ENCODE measurements at regions of chr3 and their contacts with region 1.

Region 1: DNA sequence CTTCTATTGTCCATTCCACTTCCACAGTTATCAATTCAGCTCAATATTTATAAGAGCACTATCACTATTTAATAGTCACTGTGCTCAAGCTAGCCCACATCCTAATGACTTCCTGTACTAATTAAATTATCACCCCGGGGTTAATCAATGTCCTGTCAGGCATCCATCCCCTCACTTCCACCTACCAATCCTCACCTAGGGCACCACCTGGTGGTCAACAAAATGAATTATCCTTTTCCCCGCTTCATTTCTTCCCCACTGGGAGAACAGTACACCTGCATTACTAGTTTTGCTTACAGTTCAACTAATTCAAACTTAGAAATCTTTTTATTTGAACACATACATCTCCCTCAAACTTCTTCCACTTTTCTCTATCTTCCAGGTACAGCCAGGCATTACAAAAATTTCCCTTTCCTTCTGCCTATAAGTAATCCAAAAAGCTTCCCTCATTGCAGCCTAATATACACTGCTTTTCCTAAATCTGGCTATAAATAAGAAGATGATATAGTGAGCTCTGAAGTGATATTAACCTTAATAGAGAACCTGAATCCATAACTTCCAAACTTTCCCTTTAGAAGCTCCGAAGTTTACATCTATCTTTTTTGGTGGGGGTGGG is 68.5 kb downstream of the TMCC1 start:
- DNase-seq: peak; percentile 74
- ATAC-seq: peak; percentile 50
- H3K4me3 ChIP-seq: no peak overlapping the region
- H3K4me3 Mint-ChIP-seq: no peak overlapping the region
- H3K27ac ChIP-seq: no peak overlapping the region
- H3K27ac Mint-ChIP-seq: no peak overlapping the region
- H3K4me1 ChIP-seq: peaks cover 11 to 12% of the 10 kb centered on the region in 2 donors
- H3K4me1 Mint-ChIP-seq: peaks cover 41% of the 10 kb centered on the region
- H3K27me3 ChIP-seq: no peaks in the 10 kb centered on the region
- H3K27me3 Mint-ChIP-seq: no peaks in the 10 kb centered on the region
- CTCF ChIP-seq: peak; percentile 80

Region 2: GRCh38 chr3:129173206-129173605 is 651.8 kb before region 1 on chr3:
- CTCF ChIA-PET with region 1: no interaction called
- POLR2A ChIA-PET with region 1: no interaction called
- intact Hi-C with region 1: no loop called
- DNase-seq: no peak
- ATAC-seq: no peak
- H3K4me3 ChIP-seq: no peak overlapping the region
- H3K4me3 Mint-ChIP-seq: no peak overlapping the region
- H3K27ac ChIP-seq: peak overlapping the region in 1 of 2 donors; percentile 33
- H3K27ac Mint-ChIP-seq: no peak overlapping the region
- H3K4me1 ChIP-seq: peaks cover 23 to 43% of the 10 kb centered on the region in 2 donors
- H3K4me1 Mint-ChIP-seq: peaks cover 49% of the 10 kb centered on the region
- H3K27me3 ChIP-seq: no peaks in the 10 kb centered on the region
- H3K27me3 Mint-ChIP-seq: no peaks in the 10 kb centered on the region
- CTCF ChIP-seq: no peak

Region 3: GRCh38 chr3:129323651-129324294 is 501.3 kb before region 1 on chr3:
- CTCF ChIA-PET with region 1: no interaction called
- POLR2A ChIA-PET with region 1: no interaction called
- intact Hi-C with region 1: loop called (anchors 5 kb)
- DNase-seq: peak; percentile 69
- ATAC-seq: peak; percentile 82
- H3K4me3 ChIP-seq: no peak overlapping the region
- H3K4me3 Mint-ChIP-seq: no peak overlapping the region
- H3K27ac ChIP-seq: no peak overlapping the region
- H3K27ac Mint-ChIP-seq: no peak overlapping the region
- H3K4me1 ChIP-seq: peaks cover 2 to 5% of the 10 kb centered on the region in 2 donors
- H3K4me1 Mint-ChIP-seq: peaks cover 3% of the 10 kb centered on the region
- H3K27me3 ChIP-seq: peaks cover 0 to 12% (median 6%) of the 10 kb centered on the region in 4 experiments
- H3K27me3 Mint-ChIP-seq: peaks cover 5% of the 10 kb centered on the region
- CTCF ChIP-seq: peak; percentile 50

Region 4: DNA sequence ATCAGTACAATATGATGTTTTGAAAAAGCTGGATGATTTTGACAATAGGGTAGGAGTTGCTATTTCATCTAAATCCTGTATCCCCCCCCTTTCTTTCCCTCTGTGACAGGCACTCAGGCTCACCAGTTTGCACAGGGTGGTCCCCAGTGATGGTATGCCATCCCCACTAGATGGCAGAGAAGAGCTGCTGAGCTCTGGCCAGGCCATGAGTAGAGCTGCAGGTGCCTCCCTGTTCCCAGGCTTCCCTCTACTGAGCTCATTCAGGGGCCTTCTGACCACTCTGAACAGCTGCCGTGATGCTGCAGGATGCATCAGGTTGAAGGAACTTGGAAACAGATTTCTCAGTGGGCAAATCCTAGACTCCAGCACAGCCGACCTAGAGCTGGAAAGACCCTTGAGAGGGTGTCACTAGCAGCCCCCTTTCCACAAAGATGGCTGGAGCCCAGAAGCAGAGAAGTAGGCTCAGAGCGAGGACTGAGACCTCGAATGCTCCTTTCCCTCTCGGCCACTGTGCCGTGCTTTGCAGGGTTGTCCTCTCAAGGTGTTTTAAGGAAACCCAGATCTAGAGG is 441.7 kb before region 1 on chr3:
- CTCF ChIA-PET with region 1: interaction called, 18 read pairs
- POLR2A ChIA-PET with region 1: no interaction called
- intact Hi-C with region 1: loop called (anchors 1 kb)
- DNase-seq: peak; percentile 61
- ATAC-seq: peak; percentile 93
- H3K4me3 ChIP-seq: no peak overlapping the region
- H3K4me3 Mint-ChIP-seq: no peak overlapping the region
- H3K27ac ChIP-seq: no peak overlapping the region
- H3K27ac Mint-ChIP-seq: no peak overlapping the region
- H3K4me1 ChIP-seq: no peaks in the 10 kb centered on the region
- H3K4me1 Mint-ChIP-seq: no peaks in the 10 kb centered on the region
- H3K27me3 ChIP-seq: no peaks in the 10 kb centered on the region
- H3K27me3 Mint-ChIP-seq: no peaks in the 10 kb centered on the region
- CTCF ChIP-seq: peak; percentile 78

Region 5: DNA sequence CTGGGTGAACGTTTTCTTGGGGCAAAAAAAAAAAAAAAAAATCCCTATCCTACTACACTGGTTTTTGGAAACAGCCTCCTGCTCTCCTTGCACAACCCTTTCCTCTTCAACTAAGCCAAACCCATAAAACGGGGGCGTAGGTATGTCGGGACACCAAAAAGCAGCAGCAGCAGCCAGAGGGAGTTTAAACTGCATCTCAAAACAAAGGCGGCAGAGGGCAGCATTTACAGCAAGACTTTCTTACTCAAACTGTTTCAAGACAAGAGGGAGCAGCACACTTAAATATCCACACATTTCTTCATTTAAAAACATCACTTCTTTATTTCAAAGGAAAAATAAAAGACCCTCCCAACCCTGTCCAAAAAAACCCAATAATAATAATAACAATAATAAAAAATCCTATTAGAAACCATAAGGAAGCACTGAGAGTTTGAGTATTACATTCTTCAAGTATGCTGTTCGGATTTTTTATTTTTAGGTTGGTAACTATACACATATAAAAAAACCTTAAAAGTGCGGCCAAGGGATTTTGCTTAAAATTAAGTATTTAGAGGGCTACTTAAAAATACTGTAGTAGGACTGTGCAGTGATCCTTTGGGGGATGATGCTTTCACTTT is 174.7 kb before region 1 on chr3:
- CTCF ChIA-PET with region 1: interaction called, 22 read pairs
- POLR2A ChIA-PET with region 1: no interaction called
- intact Hi-C with region 1: loop called (anchors 1 kb)
- DNase-seq: peak; percentile 65
- ATAC-seq: peak; percentile 43
- H3K4me3 ChIP-seq: no peak overlapping the region
- H3K4me3 Mint-ChIP-seq: no peak overlapping the region
- H3K27ac ChIP-seq: no peak overlapping the region
- H3K27ac Mint-ChIP-seq: no peak overlapping the region
- H3K4me1 ChIP-seq: no peaks in the 10 kb centered on the region
- H3K4me1 Mint-ChIP-seq: peaks cover 2% of the 10 kb centered on the region
- H3K27me3 ChIP-seq: no peaks in the 10 kb centered on the region
- H3K27me3 Mint-ChIP-seq: no peaks in the 10 kb centered on the region
- CTCF ChIP-seq: peak; percentile 79

Region 6: GRCh38 chr3:129893581-129894070 is 68.6 kb after region 1 on chr3 and contains the start of gene TMCC1:
- CTCF ChIA-PET with region 1: interaction called, 3 read pairs
- POLR2A ChIA-PET with region 1: no interaction called
- intact Hi-C with region 1: loop called (anchors 5 kb)
- DNase-seq: peak; percentile 94
- ATAC-seq: peak; percentile 87
- H3K4me3 ChIP-seq: peak within 1 kb of the TSS; percentile 79 to 97 (median 89)
- H3K4me3 Mint-ChIP-seq: peak within 1 kb of the TSS; percentile 93
- H3K27ac ChIP-seq: peak within 1 kb of the TSS; percentile 87 to 93
- H3K27ac Mint-ChIP-seq: peak within 1 kb of the TSS; percentile 90
- H3K4me1 ChIP-seq: peaks cover 30 to 34% of the 10 kb centered on the region in 2 donors
- H3K4me1 Mint-ChIP-seq: peaks cover 39% of the 10 kb centered on the region
- H3K27me3 ChIP-seq: no peaks in the 10 kb centered on the region
- H3K27me3 Mint-ChIP-seq: no peaks in the 10 kb centered on the region
- CTCF ChIP-seq: no peak
- total RNA-seq, gene TMCC1: 32.2 and 37.8 TPM in 2 replicates

Region 7: DNA sequence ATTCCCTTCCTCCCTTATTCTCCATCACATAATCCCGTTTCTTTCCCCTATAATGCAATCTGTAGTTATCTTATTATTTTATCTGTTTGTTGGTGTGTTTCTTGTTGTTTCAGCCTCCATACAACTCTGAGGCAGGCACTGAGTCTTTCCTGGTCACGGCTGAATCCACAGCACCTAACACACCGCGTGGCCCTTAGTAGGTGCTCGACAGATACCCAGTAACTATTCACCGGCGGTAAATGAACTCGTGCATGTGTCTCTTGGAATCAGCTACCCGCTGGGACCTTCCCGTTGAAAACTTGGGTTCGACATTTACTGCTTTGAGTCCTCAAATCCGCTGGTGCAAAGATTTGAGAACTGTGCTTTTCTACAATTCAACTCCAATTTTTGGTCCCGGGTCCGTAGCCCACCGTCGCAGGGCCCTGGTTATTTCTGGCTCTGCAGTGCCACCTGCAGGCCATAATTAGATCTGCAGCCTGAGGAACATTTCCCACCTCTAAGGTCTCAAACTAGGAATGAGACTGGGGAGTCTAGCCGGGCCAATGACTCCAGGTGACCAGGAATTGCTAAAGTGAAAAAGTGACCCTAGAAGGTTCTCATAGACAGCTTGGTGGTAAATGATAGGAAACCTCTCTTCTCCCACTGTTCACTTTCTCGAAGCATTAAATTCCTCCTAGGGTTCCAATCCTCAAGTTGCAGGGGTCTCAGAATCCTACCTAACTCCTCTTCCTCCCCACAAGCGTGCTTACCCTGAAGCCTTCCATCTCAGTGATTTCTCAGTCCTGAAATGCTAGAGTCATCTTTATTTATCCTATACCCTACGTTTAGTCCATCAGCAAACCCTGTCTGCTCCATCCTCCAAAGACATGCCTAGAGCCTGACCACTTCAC is 109.4 kb after region 1 on chr3:
- CTCF ChIA-PET with region 1: interaction called, 7 read pairs
- POLR2A ChIA-PET with region 1: no interaction called
- intact Hi-C with region 1: loop called (anchors 2 kb)
- DNase-seq: peak; percentile 63
- ATAC-seq: peak; percentile 45
- H3K4me3 ChIP-seq: no peak overlapping the region
- H3K4me3 Mint-ChIP-seq: no peak overlapping the region
- H3K27ac ChIP-seq: no peak overlapping the region
- H3K27ac Mint-ChIP-seq: no peak overlapping the region
- H3K4me1 ChIP-seq: peaks cover 2 to 4% of the 10 kb centered on the region in 2 donors
- H3K4me1 Mint-ChIP-seq: peaks cover 8% of the 10 kb centered on the region
- H3K27me3 ChIP-seq: peaks cover 0 to 5% (median 0%) of the 10 kb centered on the region in 4 experiments
- H3K27me3 Mint-ChIP-seq: peaks cover 7% of the 10 kb centered on the region
- CTCF ChIP-seq: peak; percentile 94

Measured in B cell (primary cell).